Breast epithelium (tissue), 4 donors: ENCODE measurements at regions of chr14 and their contacts with region 1.

Region 1: GRCh38 chr14:91243074-91243471 is 1.4 kb downstream of the GPR68 start:
- DNase-seq: no peak
- H3K4me3 ChIP-seq: no peak overlapping the region
- H3K27ac ChIP-seq: no peak overlapping the region
- H3K4me1 ChIP-seq: peaks cover 0 to 5% of the 10 kb centered on the region in 2 donors
- H3K27me3 ChIP-seq: no peaks in the 10 kb centered on the region
- CTCF ChIP-seq: no peak
- POLR2A ChIP-seq: no peak

Region 2: DNA sequence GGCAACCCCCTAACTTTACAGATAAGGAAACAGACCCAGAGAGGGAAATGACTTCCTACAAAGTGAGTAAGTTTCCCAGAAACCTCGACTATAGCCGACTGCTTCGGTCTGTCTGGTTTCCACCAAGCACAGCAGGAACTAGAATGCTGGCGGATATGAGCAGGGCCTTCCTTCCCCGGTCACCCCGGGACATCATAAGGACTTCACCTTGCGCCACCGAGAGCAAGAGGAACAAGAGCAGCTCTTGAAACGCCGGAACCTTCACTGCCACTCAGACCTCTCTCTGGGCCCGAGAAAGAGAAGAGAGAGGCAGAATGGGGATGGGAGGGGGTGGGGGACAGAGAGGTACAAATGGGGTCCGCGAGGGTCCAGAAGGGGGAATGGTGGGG is 30.8 kb after region 1 on chr14:
- intact Hi-C with region 1: loop called (anchors 1 kb)
- DNase-seq: no peak
- H3K4me3 ChIP-seq: no peak overlapping the region
- H3K27ac ChIP-seq: no peak overlapping the region
- H3K4me1 ChIP-seq: no peaks in the 10 kb centered on the region
- H3K27me3 ChIP-seq: no peaks in the 10 kb centered on the region
- CTCF ChIP-seq: no peak
- POLR2A ChIP-seq: no peak